ENCODE measurements at regions of chr2 and their contacts with region 1.

Region 1: DNA sequence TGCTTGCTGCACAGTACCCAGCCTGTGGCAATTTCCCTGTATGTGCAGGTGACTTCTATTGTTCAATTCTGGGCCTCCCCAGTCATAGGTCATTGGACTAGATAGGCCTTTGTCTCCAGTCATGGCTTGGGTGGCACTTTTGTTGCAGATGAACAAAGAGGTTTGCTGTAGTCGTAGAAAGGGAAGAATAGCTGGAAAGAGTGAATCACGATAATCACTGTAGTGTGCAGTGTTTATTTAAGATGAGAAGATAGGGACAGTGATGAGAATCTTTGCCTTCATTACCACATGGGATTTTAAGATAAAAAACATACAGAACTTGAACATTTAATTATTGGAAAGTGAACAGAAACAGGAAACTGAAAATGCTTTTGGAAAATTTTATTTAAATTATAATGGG is 156.1 kb upstream of the CYRIA start:
- DNase-seq: no peak
- H3K4me3 ChIP-seq: no peak overlapping the region
- H3K27ac ChIP-seq: no peak overlapping the region
- H3K4me1 ChIP-seq: no peaks in the 10 kb centered on the region
- H3K27me3 ChIP-seq: no peaks in the 10 kb centered on the region
- CTCF ChIP-seq: no peak

Region 2: DNA sequence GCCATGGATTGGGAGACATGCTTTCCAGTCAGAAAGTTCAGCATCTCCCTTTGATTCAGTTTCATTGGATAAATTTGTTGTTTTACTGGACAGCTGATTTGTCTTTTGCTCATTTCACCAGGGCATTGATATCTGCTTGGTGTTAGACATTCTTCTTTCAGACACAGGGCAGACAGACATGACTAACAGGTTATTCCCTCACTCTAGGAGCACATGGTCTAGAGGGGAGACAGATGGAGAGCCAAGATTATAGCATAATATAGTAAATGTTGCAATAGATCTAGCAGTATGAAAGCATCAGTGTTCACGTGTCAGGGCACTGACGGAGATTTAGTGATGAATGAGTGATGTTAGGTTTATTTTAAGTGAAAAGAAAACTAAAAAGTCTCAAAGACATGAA is 31.0 kb after region 1 on chr2:
- CTCF ChIA-PET with region 1: no interaction called
- POLR2A ChIA-PET with region 1: no interaction called
- intact Hi-C with region 1: no loop called
- DNase-seq: no peak
- H3K4me3 ChIP-seq: no peak overlapping the region
- H3K27ac ChIP-seq: no peak overlapping the region
- H3K4me1 ChIP-seq: no peaks in the 10 kb centered on the region
- H3K27me3 ChIP-seq: no peaks in the 10 kb centered on the region
- CTCF ChIP-seq: no peak

Region 3: GRCh38 chr2:17557596-17557995 is 735.9 kb after region 1 on chr2:
- CTCF ChIA-PET with region 1: interaction called, 16 read pairs
- POLR2A ChIA-PET with region 1: no interaction called
- intact Hi-C with region 1: no loop called
- DNase-seq: no peak
- H3K4me3 ChIP-seq: no peak overlapping the region
- H3K27ac ChIP-seq: no peak overlapping the region
- H3K4me1 ChIP-seq: no peaks in the 10 kb centered on the region
- H3K27me3 ChIP-seq: no peaks in the 10 kb centered on the region
- CTCF ChIP-seq: no peak

Region 4: DNA sequence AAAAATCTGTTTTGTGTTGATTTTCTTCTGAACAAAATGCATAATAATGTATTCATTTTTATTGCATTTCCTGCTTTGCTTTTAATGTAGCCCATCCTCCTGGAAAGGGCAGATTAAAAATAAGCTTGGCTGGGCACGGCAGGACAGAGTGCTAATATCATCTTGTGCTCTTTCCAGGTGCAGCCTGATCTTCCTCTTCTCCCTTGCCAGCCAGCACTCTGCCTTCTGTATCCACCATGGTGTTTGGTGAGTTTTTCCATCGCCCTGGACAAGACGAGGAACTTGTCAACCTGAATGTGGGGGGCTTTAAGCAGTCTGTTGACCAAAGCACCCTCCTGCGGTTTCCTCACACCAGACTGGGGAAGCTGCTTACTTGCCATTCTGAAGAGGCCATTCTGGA is 1109.1 kb after region 1 on chr2:
- CTCF ChIA-PET with region 1: no interaction called
- POLR2A ChIA-PET with region 1: no interaction called
- intact Hi-C with region 1: no loop called
- DNase-seq: no peak
- H3K4me3 ChIP-seq: no peak overlapping the region
- H3K27ac ChIP-seq: no peak overlapping the region
- H3K4me1 ChIP-seq: peaks cover 2% of the 10 kb centered on the region; the same call in 1 of the 2 replicates
- H3K27me3 ChIP-seq: no peaks in the 10 kb centered on the region
- CTCF ChIP-seq: no peak

Measured in PC-9 (cell line).